ENCODE measurements at regions of chr12 and their contacts with region 1.

Region 1: DNA sequence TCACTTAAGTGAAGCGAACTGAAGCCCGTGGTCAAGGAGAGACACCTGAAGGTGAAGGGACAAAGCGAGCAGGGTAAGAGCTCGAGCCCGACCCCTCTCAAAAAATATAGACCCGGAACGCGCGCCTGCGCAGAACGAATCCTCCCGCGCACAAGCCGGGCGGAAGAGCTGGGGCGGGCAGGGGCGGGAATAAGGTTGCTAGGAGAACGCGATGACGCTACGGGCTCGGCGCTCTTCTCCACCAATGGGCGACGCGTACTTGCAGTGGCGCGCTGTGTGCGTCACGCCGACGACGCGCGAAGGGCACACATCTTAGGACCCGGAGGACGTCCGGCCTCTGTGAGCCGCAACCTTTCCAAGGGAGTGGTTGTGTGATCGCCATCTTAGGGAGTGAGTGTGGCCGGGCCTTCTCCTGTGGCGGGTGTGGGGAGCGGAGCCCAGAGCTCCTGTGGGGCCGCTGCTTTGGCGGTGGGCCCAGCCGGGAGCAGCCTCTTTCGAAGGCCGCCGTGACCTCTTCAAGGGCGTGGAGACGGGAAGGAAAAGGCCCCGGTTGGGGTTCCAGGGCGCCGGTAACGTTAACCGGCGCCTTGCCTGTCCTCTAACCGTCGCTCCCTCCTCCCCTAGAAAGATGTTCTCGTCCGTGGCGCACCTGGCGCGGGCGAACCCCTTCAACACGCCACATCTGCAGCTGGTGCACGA is at the start of gene SLC25A3:
- DNase-seq: peak; percentile 98
- ATAC-seq: peak; percentile 96
- H3K4me3 ChIP-seq: peak within 1 kb of the TSS; percentile 96
- H3K27ac ChIP-seq: peak within 1 kb of the TSS; percentile 95
- H3K4me1 ChIP-seq: peaks cover 5% of the 10 kb centered on the region
- H3K27me3 ChIP-seq: no peaks in the 10 kb centered on the region
- CTCF ChIP-seq: no peak
- POLR2A ChIP-seq: peak; percentile 99
- RAD21 ChIP-seq: no peak
- total RNA-seq, gene SLC25A3: 861 and 1,218 TPM in 2 replicates

Region 2: GRCh38 chr12:98424726-98425401 is 168.6 kb before region 1 on chr12:
- CTCF ChIA-PET with region 1: no interaction called
- POLR2A ChIA-PET with region 1: no interaction called
- dilution Hi-C with region 1: no loop called
- in situ Hi-C with region 1: no loop called
- intact Hi-C with region 1: loop called (anchors 1 kb)
- DNase-seq: peak; percentile 73
- ATAC-seq: peak; percentile 94
- H3K4me3 ChIP-seq: no peak overlapping the region
- H3K27ac ChIP-seq: no peak overlapping the region
- H3K4me1 ChIP-seq: peaks cover 2% of the 10 kb centered on the region; the same call in 1 of the 2 replicates
- H3K27me3 ChIP-seq: no peaks in the 10 kb centered on the region; the same call in 1 of the 2 replicates
- CTCF ChIP-seq: peak; percentile 75
- POLR2A ChIP-seq: no peak
- RAD21 ChIP-seq: peak; percentile 63

Region 3: GRCh38 chr12:98516184-98516873 is 77.2 kb before region 1 on chr12:
- CTCF ChIA-PET with region 1: no interaction called
- POLR2A ChIA-PET with region 1: interaction called, 3 read pairs
- dilution Hi-C with region 1: no loop called
- in situ Hi-C with region 1: no loop called
- intact Hi-C with region 1: loop called (anchors 5 kb)
- DNase-seq: peak; percentile 81
- ATAC-seq: peak; percentile 49
- H3K4me3 ChIP-seq: peak overlapping the region; percentile 93
- H3K27ac ChIP-seq: peak overlapping the region; percentile 84; the same call in 1 of the 2 replicates
- H3K4me1 ChIP-seq: no peaks in the 10 kb centered on the region
- H3K27me3 ChIP-seq: no peaks in the 10 kb centered on the region
- CTCF ChIP-seq: peak; percentile 82
- POLR2A ChIP-seq: peak; percentile 36; the same call in 1 of the 2 replicates
- RAD21 ChIP-seq: peak; percentile 80

Region 4: DNA sequence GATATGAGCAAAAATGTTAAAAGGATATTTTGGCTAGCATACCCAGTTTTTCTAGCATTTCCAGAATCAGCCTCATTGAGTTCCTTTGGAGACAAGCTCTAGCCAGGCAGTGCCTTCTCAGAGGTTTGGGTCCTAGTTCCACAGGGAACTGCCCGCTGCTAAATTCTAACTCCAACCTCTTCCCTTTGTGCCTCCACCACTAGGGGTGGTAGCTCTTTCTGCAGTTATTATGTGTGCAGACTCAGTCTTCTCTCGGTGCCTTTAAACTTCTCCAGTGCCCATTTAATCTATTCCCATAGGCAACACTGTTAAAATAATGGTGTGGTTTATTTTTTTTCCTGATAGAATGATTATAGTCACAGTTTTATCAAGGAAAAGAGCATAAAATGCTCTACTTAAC is 21.5 kb before region 1 on chr12:
- CTCF ChIA-PET with region 1: interaction called, 14 read pairs
- POLR2A ChIA-PET with region 1: no interaction called
- dilution Hi-C with region 1: no loop called
- in situ Hi-C with region 1: no loop called
- intact Hi-C with region 1: loop called (anchors 2 kb)
- DNase-seq: no peak
- ATAC-seq: no peak
- H3K4me3 ChIP-seq: no peak overlapping the region
- H3K27ac ChIP-seq: no peak overlapping the region
- H3K4me1 ChIP-seq: no peaks in the 10 kb centered on the region
- H3K27me3 ChIP-seq: no peaks in the 10 kb centered on the region
- CTCF ChIP-seq: 0 out of 2 replicates have a peak, but pooled peaks have one; percentile 1
- POLR2A ChIP-seq: no peak
- RAD21 ChIP-seq: no peak

Region 5: DNA sequence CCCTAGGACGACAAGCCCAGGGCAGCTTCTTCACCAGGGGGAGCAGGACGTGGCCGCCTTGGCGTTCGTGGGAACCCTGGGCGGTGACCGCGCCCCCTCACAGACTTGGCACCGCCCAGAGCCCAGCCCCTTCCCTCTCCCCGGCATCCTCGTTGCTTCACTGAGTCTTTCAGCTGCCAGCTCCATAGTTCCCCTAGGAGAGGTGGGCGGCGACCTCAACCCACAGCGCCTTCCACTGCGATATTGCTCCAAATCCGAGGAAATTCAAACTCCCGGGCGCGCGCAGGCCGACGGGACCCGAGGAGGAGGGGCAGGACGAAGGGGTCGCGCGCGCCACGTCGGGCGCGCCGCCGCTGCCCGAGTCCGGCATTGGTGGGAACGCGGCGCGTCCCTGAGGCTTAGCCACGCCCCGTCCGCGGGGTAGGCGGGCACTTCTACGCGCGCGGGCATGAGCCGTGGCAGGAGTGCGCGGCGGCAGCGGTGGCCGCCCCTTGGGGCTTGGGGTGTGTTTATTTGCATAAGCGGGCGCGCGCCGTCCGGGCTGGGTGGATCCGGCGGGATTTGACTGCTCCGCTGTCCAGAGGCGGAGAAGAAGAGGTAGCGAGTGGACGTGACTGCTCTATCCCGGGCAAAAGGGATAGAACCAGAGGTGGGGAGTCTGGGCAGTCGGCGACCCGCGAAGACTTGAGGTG is 51.4 kb after region 1 on chr12 and contains the starts of genes APAF1 and IKBIP:
- CTCF ChIA-PET with region 1: no interaction called
- POLR2A ChIA-PET with region 1: interaction called, 3 read pairs
- dilution Hi-C with region 1: no loop called
- in situ Hi-C with region 1: no loop called
- intact Hi-C with region 1: loop called (anchors 1 kb)
- DNase-seq: peak; percentile 94
- ATAC-seq: peak; percentile 96
- H3K4me3 ChIP-seq: peak within 1 kb of the TSS; percentile 67
- H3K27ac ChIP-seq: peak within 1 kb of the TSS; percentile 69
- H3K4me1 ChIP-seq: no peaks in the 10 kb centered on the region; the same call in 1 of the 2 replicates
- H3K27me3 ChIP-seq: no peaks in the 10 kb centered on the region
- CTCF ChIP-seq: no peak
- POLR2A ChIP-seq: peak; percentile 86
- RAD21 ChIP-seq: no peak
- total RNA-seq, gene APAF1: 32.8 and 42.2 TPM in 2 replicates
- total RNA-seq, gene IKBIP: 37.1 and 88.3 TPM in 2 replicates

Region 6: DNA sequence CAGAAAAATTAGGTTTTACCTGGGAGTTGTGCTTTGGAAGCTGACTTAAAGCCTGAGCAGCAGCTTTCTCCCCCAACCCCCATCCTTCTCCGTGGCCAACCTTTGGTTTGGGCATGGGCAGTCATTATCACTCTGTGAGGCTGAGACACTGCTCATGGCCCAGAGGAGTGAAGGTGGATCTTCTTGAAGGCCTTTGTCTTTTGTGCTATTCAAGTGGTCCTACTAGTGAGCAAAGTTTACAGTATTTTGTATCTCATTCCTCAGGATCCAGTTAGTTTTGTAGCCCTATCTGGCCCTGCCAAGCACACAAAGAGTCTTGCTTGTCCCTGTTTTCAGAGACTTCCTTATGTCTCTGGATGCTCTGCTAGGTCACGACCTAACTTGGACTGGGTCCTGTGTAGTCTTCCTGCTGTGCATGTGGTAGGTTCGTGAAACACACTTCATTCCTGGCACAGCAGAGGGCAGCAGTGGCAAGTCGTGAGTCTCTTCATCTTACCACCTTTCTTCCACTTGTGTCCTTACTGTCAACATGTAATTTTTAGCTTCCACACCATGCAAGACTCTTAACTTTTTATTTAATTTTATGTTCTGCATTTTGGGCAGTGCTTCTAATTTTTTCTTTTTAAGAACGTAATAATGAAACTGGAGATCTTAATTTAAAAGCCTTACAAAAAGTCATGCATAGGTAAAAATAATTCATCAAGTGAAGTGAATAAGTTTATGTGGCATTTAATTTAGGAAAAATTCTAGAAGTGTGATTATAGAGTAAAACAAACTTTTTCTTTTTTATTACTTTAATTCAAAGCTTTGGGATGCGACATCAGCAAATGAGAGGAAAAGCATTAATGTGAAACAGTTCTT is 105.3 kb after region 1 on chr12:
- CTCF ChIA-PET with region 1: no interaction called
- POLR2A ChIA-PET with region 1: no interaction called
- dilution Hi-C with region 1: no loop called
- in situ Hi-C with region 1: no loop called
- intact Hi-C with region 1: no loop called
- DNase-seq: peak; percentile 59
- ATAC-seq: peak; percentile 91
- H3K4me3 ChIP-seq: no peak overlapping the region
- H3K27ac ChIP-seq: no peak overlapping the region
- H3K4me1 ChIP-seq: peaks cover 2% of the 10 kb centered on the region; the same call in 1 of the 2 replicates
- H3K27me3 ChIP-seq: no peaks in the 10 kb centered on the region
- CTCF ChIP-seq: peak; percentile 55
- POLR2A ChIP-seq: no peak
- RAD21 ChIP-seq: peak; percentile 66

Region 7: GRCh38 chr12:99505805-99506204 is 912.3 kb after region 1 on chr12:
- CTCF ChIA-PET with region 1: no interaction called
- POLR2A ChIA-PET with region 1: no interaction called
- dilution Hi-C with region 1: no loop called
- in situ Hi-C with region 1: no loop called
- intact Hi-C with region 1: no loop called
- DNase-seq: no peak
- ATAC-seq: no peak
- H3K4me3 ChIP-seq: no peak overlapping the region
- H3K27ac ChIP-seq: no peak overlapping the region
- H3K4me1 ChIP-seq: no peaks in the 10 kb centered on the region
- H3K27me3 ChIP-seq: no peaks in the 10 kb centered on the region
- CTCF ChIP-seq: no peak
- POLR2A ChIP-seq: no peak
- RAD21 ChIP-seq: no peak